Activated CD4-positive, alpha-beta memory T cell treated with anti-CD3 and anti-CD28 coated beads for 36 hours (primary cell): ENCODE measurements at regions of chr12 and their contacts with region 1.

Region 1: DNA sequence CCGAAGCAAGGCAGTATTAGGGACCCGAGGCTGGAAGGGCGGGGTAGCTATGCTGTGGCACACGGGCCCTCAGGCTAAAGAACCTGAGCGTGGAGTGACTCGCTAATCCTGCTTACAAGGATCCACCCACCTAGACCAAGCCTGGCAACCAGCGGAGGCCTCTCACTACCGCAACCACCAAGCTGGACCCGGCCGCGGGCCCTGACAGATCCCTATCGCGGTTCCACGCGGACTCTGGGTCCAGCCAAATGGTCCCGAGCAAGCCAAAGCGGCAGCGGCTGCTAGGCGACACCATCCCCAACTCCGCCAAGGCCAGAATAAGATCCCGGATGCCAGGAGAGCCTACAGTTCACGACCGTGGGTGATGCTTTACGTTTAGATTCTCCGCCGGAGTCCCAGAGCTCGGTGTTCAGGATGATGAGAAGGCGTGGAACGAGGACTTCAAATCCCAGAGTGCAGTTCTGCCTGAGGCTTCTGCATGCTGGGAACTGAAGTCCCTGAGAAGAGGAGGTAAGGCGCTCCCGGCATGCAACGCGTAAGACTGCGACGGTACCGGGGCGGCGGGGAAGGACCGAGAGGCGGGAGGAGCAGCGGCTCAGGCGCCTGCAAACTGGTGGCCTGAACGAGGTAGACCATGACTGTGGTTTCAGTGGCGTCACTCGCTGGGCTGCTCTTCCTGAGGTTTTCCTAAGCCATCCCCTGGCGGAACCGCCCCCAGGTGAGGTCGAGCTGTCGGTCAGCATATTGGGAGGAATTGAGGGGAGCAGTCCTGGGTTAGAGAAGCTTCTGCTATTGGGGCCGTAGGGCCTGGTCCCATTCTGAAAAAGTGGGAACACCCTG is at the starts of genes CEP290 and TMTC3:
- DNase-seq: peak; percentile 95
- H3K4me3 Mint-ChIP-seq: peak within 1 kb of the TSS; percentile 96
- H3K27ac Mint-ChIP-seq: peak within 1 kb of the TSS; percentile 86
- H3K4me1 Mint-ChIP-seq: peaks cover 37% of the 10 kb centered on the region
- H3K27me3 Mint-ChIP-seq: no peaks in the 10 kb centered on the region
- total RNA-seq, gene CEP290: 12.8 to 13.7 TPM
- total RNA-seq, gene TMTC3: 5.3 to 6.8 TPM

Region 2: DNA sequence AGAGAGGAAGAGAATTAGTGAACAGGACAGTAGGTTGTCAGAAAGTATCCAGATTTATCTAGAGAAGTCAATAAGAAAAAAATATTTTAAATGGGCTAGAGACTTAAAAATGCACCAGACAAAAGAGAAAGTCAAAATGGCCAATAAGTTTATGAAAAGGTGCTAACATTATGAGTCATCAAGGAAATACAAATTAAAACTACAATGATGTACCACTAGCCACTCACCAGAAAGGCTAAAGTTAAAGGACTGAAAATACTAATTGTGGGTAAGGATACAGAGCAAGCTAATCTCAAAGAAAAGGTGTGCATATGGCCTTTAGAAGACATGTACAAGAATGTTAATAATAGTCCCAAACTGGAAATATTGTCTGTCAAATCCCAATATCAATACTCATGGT is 150.5 kb before region 1 on chr12:
- CTCF ChIA-PET with region 1: no interaction called
- POLR2A ChIA-PET with region 1: no interaction called
- intact Hi-C with region 1: no loop called
- DNase-seq: no peak
- H3K4me3 Mint-ChIP-seq: no peak overlapping the region
- H3K27ac Mint-ChIP-seq: no peak overlapping the region
- H3K4me1 Mint-ChIP-seq: peaks cover 2% of the 10 kb centered on the region
- H3K27me3 Mint-ChIP-seq: peaks cover 2% of the 10 kb centered on the region

Region 3: DNA sequence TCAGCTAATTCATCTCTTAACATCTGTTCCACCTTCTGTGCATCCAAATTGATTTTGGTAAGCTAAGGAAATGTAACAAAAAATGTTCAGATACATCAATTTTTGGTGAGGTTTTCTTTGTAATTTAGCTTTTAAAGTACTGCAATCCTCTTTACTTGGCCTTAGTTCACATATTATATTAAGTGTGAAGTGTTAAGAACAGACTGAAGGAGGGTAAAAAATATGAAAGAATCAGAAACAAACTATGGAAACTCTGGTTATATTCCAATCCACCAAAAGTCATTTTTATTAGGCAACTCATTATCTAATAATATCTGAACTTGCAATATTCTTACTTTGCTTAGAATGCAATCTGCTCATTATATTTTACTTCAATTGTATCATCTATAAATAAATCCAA is 49.2 kb before region 1 on chr12:
- CTCF ChIA-PET with region 1: no interaction called
- POLR2A ChIA-PET with region 1: no interaction called
- intact Hi-C with region 1: no loop called
- DNase-seq: no peak
- H3K4me3 Mint-ChIP-seq: no peak overlapping the region
- H3K27ac Mint-ChIP-seq: no peak overlapping the region
- H3K4me1 Mint-ChIP-seq: no peaks in the 10 kb centered on the region
- H3K27me3 Mint-ChIP-seq: no peaks in the 10 kb centered on the region

Region 4: GRCh38 chr12:88111074-88111652 is 30.8 kb before region 1 on chr12:
- CTCF ChIA-PET with region 1: no interaction called
- POLR2A ChIA-PET with region 1: no interaction called
- intact Hi-C with region 1: loop called (anchors 2 kb)
- DNase-seq: no peak
- H3K4me3 Mint-ChIP-seq: no peak overlapping the region
- H3K27ac Mint-ChIP-seq: no peak overlapping the region
- H3K4me1 Mint-ChIP-seq: peaks cover 2% of the 10 kb centered on the region
- H3K27me3 Mint-ChIP-seq: no peaks in the 10 kb centered on the region

Region 5: GRCh38 chr12:88241862-88242570 is 100.0 kb after region 1 on chr12:
- CTCF ChIA-PET with region 1: no interaction called
- POLR2A ChIA-PET with region 1: no interaction called
- intact Hi-C with region 1: loop called (anchors 1 kb)
- DNase-seq: peak; percentile 54
- H3K4me3 Mint-ChIP-seq: no peak overlapping the region
- H3K27ac Mint-ChIP-seq: peak overlapping the region; percentile 83
- H3K4me1 Mint-ChIP-seq: peaks cover 35% of the 10 kb centered on the region
- H3K27me3 Mint-ChIP-seq: peaks cover 13% of the 10 kb centered on the region

Region 6: GRCh38 chr12:88393017-88393767 is 251.2 kb after region 1 on chr12:
- CTCF ChIA-PET with region 1: no interaction called
- POLR2A ChIA-PET with region 1: no interaction called
- intact Hi-C with region 1: loop called (anchors 5 kb)
- DNase-seq: no peak
- H3K4me3 Mint-ChIP-seq: no peak overlapping the region
- H3K27ac Mint-ChIP-seq: no peak overlapping the region
- H3K4me1 Mint-ChIP-seq: peaks cover 5% of the 10 kb centered on the region
- H3K27me3 Mint-ChIP-seq: peaks cover 2% of the 10 kb centered on the region